Activated CD4-positive, alpha-beta memory T cell treated with anti-CD3 and anti-CD28 coated beads for 36 hours (primary cell): ENCODE measurements at regions of chr12 and their contacts with region 1.

Region 1: DNA sequence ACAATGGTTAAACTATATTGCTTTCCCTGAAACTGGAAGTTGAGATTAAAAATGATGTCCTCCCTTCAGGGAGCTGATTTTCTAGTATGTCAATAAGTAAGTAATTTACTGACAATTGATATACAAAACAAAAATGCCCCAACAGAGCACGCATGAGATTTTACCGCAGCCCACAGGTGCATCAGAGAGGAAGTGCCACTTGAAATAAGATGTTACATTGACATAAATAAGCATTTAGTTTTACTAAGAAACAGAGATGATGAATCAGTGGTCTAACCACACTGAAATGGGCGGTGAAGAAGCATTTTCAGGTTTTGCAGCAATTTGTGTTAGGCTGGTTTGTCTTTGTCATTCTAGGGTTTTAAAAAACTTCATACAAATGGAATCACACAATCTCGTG is 8.8 kb upstream of the CLECL1 start:
- DNase-seq: peak; percentile 90
- H3K4me3 Mint-ChIP-seq: peak overlapping the region; percentile 74
- H3K27ac Mint-ChIP-seq: peak overlapping the region; percentile 79
- H3K4me1 Mint-ChIP-seq: peaks cover 69% of the 10 kb centered on the region
- H3K27me3 Mint-ChIP-seq: no peaks in the 10 kb centered on the region

Region 2: GRCh38 chr12:9634177-9634803 is 107.4 kb before region 1 on chr12:
- CTCF ChIA-PET with region 1: interaction called, 14 read pairs
- POLR2A ChIA-PET with region 1: no interaction called
- intact Hi-C with region 1: no loop called
- DNase-seq: peak; percentile 81
- H3K4me3 Mint-ChIP-seq: no peak overlapping the region
- H3K27ac Mint-ChIP-seq: peak overlapping the region; percentile 66
- H3K4me1 Mint-ChIP-seq: peaks cover 60% of the 10 kb centered on the region
- H3K27me3 Mint-ChIP-seq: no peaks in the 10 kb centered on the region

Region 3: GRCh38 chr12:9707864-9708808 is 33.6 kb before region 1 on chr12:
- CTCF ChIA-PET with region 1: interaction called, 29 read pairs
- POLR2A ChIA-PET with region 1: no interaction called
- intact Hi-C with region 1: loop called (anchors 2 kb)
- DNase-seq: peak; percentile 81
- H3K4me3 Mint-ChIP-seq: peak overlapping the region; percentile 62
- H3K27ac Mint-ChIP-seq: peak overlapping the region; percentile 85
- H3K4me1 Mint-ChIP-seq: peaks cover 40% of the 10 kb centered on the region
- H3K27me3 Mint-ChIP-seq: no peaks in the 10 kb centered on the region

Region 4: DNA sequence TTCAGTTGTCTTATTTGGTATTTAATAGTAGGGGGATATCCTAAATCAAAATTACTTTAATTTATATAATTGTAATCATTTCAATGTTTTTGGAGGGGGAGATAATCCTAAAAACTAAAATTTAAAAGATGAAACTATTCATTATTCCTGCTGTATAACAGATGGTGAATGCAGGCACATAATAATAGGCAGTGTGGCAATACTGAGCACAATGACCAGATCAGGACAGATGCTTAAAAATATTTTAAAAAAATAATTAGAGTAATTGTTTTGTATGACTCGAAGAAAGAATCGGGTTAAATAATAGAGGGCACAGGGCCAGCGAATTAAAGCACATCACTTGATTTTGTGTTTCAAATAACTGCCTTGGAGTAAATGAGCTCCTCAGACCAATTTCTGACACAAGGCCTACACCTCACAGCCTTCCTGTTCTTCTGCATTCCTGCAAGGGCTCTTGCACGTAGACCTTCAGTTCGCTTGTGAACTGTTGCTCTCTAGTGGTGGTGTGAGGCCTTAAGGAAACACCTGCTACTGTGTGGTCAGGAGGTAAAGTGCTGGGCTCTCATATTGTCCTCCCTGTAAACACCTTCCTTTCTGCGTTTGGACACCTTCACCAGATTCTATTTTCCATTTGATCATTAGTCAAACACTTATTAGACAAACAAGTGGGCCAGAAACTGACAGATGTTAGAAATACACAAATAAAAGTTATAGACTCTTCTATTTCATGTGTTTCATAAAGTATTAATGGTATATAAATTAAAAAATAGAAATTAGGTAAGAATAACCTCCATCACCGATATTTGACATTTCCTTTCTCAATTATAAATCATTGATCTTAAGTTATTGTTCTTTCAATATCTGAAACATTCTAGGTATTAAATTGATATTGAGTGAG is 56.2 kb after region 1 on chr12:
- CTCF ChIA-PET with region 1: interaction called, 624 read pairs
- POLR2A ChIA-PET with region 1: interaction called, 7 read pairs
- intact Hi-C with region 1: no loop called
- DNase-seq: peak; percentile 77
- H3K4me3 Mint-ChIP-seq: no peak overlapping the region
- H3K27ac Mint-ChIP-seq: peak overlapping the region; percentile 54
- H3K4me1 Mint-ChIP-seq: peaks cover 44% of the 10 kb centered on the region
- H3K27me3 Mint-ChIP-seq: no peaks in the 10 kb centered on the region

Region 5: DNA sequence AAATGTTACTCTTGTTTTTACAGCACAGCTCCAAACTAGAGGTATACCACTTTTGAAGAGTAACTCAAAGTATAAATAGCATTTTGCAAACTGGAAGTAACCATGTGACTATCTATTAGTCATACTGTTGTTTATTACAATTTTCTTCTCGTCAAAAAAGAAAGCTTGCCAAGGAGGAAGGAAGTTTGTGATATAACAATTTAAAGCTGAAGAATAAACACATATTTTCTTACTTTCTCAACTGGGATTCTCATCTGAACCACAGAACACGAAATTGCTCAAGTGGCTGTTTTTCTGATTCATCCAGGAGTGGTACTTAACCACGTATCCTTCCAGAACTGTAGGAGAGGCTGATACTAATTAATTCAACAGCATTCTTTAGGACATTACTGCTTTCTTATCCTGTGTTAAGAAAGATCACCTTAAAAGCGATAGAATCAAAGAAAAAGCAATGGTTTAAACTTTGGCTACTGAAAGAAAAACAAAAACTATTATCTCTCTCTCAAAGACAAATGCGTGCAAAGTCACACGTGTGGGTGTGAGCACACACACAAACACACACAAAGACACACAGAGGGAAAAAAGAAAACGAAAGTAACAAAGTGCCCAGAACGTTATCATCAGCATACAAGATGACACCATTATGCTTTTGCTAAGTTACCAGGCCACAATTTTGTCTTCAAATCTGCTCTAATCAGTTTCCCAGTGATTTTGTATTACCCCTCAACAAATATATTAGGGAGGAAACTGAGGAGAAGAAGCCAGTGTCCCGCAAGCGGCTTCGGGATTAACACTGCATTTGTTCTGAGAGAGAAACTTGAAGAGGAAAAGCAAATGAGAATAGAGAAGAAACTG is 127.8 kb after region 1 on chr12 and contains the start of gene CLEC2B:
- CTCF ChIA-PET with region 1: interaction called, 10 read pairs
- POLR2A ChIA-PET with region 1: interaction called, 4 read pairs
- intact Hi-C with region 1: no loop called
- DNase-seq: peak; percentile 41
- H3K4me3 Mint-ChIP-seq: peak within 1 kb of the TSS; percentile 82
- H3K27ac Mint-ChIP-seq: peak within 1 kb of the TSS; percentile 93
- H3K4me1 Mint-ChIP-seq: peaks cover 19% of the 10 kb centered on the region
- H3K27me3 Mint-ChIP-seq: no peaks in the 10 kb centered on the region
- total RNA-seq, gene CLEC2B: 12.6 to 13.7 TPM

Region 6: GRCh38 chr12:10212201-10213131 is 470.7 kb after region 1 on chr12 and contains the start of gene GABARAPL1:
- CTCF ChIA-PET with region 1: interaction called, 3 read pairs
- POLR2A ChIA-PET with region 1: no interaction called
- intact Hi-C with region 1: loop called (anchors 2 kb)
- DNase-seq: peak; percentile 94
- H3K4me3 Mint-ChIP-seq: peak within 1 kb of the TSS; percentile 89
- H3K27ac Mint-ChIP-seq: peak within 1 kb of the TSS; percentile 78
- H3K4me1 Mint-ChIP-seq: peaks cover 21% of the 10 kb centered on the region
- H3K27me3 Mint-ChIP-seq: no peaks in the 10 kb centered on the region
- total RNA-seq, gene GABARAPL1: 7.2 to 8.9 TPM